B cell (primary cell): ENCODE measurements at regions of chr15 and their contacts with region 1.

Region 1: DNA sequence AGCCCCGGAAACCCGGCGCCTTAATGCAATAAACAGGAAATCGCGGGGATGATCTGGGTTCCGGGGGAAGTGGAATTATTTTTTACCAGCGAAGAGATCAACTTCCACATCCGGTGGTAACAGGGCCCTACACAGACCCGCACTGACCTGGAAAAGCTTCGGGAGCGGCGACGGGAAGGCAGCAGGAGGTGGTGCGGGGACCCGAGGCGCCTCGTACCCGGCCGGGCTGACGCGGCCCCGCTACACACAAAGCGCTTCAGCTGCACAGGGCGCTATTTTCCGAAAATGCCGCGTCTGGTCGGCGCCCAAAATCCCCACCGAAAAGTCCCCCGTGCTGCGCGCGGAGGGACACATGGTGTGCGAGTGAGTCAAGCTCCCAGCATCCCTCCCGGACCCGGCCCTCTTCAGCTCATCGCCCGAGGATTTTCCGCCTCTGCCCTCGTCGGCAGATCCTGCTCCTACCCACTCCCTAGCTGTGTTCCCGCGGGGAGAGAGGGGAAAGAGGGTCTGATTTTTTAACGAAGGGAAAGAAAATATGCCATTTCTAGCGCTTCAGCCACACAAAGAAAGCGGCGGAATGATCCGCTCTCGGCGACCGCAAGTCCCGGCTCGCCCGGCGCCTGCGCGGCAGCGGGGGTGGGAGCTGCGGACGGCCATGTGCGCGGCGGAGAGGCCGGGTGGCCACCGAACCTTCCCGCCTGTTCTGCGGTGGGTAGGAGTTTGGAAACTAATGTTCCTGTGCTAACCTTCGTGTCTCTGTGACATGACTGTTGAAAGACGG is at the start of gene GABPB1:
- DNase-seq: peak; percentile 99
- ATAC-seq: peak; percentile 58
- H3K4me3 ChIP-seq: peak within 1 kb of the TSS; percentile 71 to 91 (median 82)
- H3K4me3 Mint-ChIP-seq: peak within 1 kb of the TSS; percentile 95
- H3K27ac ChIP-seq: peak within 1 kb of the TSS; percentile 98 to 99
- H3K27ac Mint-ChIP-seq: peak within 1 kb of the TSS; percentile 98
- H3K4me1 ChIP-seq: peaks cover 44 to 52% of the 10 kb centered on the region in 2 donors
- H3K4me1 Mint-ChIP-seq: peaks cover 60% of the 10 kb centered on the region
- H3K27me3 ChIP-seq: no peaks in the 10 kb centered on the region
- H3K27me3 Mint-ChIP-seq: no peaks in the 10 kb centered on the region
- CTCF ChIP-seq: no peak
- total RNA-seq, gene GABPB1: 37.1 and 37.3 TPM in 2 replicates

Region 2: DNA sequence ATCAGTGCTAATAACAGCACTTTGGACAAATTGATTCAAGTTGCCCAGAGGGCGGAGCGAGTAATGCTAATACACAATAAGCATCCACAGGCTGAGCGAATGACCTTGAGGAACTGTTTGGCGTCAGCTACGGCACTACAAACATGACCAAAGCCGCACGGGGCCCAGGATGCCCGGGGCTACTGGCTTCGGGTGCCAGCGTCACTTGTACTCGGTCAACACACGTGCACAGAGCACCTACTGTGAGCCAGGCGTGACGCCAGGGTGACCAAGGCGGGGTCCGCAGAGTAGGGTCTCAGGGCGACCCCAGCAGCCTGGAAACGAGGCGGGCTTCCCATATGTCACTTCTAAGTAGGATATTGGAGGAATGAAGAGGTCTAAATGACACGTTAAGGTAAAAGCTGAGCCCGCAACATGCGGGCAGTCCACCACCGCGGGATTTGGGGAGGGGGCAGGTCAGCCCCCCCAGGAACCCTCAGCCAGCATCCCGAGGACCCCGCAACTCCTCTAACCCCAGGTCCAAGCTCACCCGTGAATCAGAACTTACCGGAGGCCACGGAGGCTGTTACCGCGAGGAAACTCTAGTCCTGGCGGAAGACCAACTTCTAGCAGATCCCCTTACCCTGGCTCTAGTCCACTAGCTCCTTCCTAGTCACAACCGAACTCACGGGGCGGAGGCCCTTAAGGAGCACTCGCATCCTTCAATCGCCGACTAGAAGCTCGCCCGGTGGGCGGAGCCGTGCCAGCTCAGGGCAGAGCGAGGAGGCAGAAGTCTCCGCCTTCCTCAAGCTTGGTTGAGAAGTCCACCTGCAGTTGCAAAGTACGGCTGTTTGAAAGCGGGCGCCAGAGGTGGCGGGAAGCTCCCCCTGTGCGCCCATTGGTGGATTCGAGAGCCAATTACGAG is 1544.4 kb before region 1 on chr15 and contains the start of gene CEP152:
- CTCF ChIA-PET with region 1: no interaction called
- POLR2A ChIA-PET with region 1: no interaction called
- intact Hi-C with region 1: loop called (anchors 1 kb)
- DNase-seq: peak; percentile 99
- ATAC-seq: peak; percentile 95
- H3K4me3 ChIP-seq: peak within 1 kb of the TSS; percentile 86 to 97 (median 94)
- H3K4me3 Mint-ChIP-seq: peak within 1 kb of the TSS; percentile 95
- H3K27ac ChIP-seq: peak within 1 kb of the TSS; percentile 74 to 76
- H3K27ac Mint-ChIP-seq: peak within 1 kb of the TSS; percentile 86
- H3K4me1 ChIP-seq: peaks cover 15 to 18% of the 10 kb centered on the region in 2 donors
- H3K4me1 Mint-ChIP-seq: peaks cover 30% of the 10 kb centered on the region
- H3K27me3 ChIP-seq: peaks cover 0 to 7% (median 0%) of the 10 kb centered on the region in 4 experiments
- H3K27me3 Mint-ChIP-seq: peaks cover 4% of the 10 kb centered on the region
- CTCF ChIP-seq: no peak
- total RNA-seq, gene CEP152: 18.0 and 18.1 TPM in 2 replicates

Region 3: DNA sequence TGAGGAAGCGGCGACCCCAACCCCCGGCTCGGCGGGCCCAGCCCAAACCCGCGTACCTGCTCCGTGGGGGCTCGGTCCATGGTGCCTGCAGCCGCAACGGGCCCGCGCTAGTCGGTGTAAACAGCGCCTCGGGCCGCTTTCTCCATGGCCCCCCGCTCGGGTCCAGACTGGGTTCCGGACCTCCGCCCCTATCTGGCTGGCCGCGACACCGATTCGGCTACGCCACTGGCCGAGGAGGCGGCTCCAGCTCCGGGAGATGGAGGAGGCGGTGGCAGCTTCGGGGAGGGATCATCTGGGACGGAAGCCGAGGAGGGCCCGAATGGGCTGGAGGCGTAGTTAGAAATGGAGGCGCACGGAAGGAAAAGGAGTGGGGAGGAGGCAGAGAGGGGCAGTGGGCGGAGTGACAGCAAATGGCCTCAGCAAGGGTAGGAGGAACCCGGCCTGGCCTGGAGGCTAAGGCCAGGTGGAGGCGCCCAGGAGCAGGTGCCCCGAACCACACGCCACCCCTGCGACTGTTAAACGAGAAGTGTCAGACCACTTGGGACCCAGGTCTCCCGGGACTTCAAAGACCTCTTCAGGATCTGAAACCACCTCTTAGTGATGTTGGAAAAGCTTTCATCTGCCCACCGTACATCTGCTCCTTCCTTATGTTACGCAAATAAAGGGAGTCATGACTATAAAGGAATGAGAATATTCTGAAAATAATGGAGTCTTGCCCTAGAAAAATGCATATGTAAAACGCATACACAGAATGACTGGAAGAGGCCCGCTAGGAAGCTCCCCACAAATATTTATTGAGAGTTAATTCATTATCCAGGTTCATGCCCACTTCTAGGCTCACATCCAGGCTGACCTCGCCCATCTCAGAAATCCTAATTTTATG is 1308.6 kb before region 1 on chr15 and contains the start of gene SECISBP2L:
- CTCF ChIA-PET with region 1: no interaction called
- POLR2A ChIA-PET with region 1: no interaction called
- intact Hi-C with region 1: loop called (anchors 10 kb)
- DNase-seq: peak; percentile 96
- ATAC-seq: peak; percentile 96
- H3K4me3 ChIP-seq: peak within 1 kb of the TSS; percentile 78 to 98 (median 80)
- H3K4me3 Mint-ChIP-seq: peak within 1 kb of the TSS; percentile 95
- H3K27ac ChIP-seq: peak within 1 kb of the TSS; percentile 83 to 89
- H3K27ac Mint-ChIP-seq: peak within 1 kb of the TSS; percentile 98
- H3K4me1 ChIP-seq: peaks cover 12 to 19% of the 10 kb centered on the region in 2 donors
- H3K4me1 Mint-ChIP-seq: peaks cover 32% of the 10 kb centered on the region
- H3K27me3 ChIP-seq: no peaks in the 10 kb centered on the region
- H3K27me3 Mint-ChIP-seq: no peaks in the 10 kb centered on the region
- CTCF ChIP-seq: peak; percentile 45
- total RNA-seq, gene SECISBP2L: 117 and 121 TPM in 2 replicates

Region 4: DNA sequence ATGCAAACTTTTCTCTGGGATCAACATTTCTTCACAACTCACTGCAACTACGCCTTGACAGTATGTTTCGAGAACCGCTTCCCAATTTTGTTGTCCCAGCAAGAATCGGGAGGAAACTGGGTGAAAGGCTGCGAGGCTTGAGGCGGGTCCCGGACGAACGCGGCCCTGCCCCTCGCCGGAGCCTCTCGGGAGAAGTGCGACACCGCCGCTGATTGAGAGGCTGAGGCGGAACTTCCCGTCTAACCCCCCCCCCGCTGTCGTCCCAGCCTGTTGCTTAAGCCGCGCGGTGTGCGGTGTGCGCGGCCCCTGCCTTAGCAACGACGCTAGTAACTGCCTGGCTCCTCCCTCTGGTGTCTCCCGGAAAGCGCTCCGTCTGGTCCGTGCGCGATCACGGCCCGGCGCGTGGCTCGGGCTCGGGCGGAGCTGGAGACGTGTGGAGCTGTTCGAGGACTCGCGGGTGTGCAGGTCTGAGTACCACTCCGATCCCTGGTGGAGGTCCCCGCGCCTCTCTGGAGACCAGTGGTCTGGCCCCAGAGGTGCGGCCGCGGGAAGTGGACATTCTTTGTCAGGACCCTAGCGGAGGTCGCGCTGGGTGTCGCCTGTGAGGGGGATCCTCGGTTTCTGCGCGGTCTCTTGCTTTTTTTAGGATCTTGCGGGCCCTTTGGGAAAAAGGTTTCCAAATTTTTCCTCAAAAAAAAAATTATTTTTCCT is 734.2 kb before region 1 on chr15 and contains the starts of genes DTWD1 and FAM227B:
- CTCF ChIA-PET with region 1: no interaction called
- POLR2A ChIA-PET with region 1: interaction called, 4 read pairs
- intact Hi-C with region 1: loop called (anchors 5 kb)
- DNase-seq: peak; percentile 96
- ATAC-seq: peak; percentile 98
- H3K4me3 ChIP-seq: peak within 1 kb of the TSS; percentile 75 to 91 (median 83)
- H3K4me3 Mint-ChIP-seq: peak within 1 kb of the TSS; percentile 93
- H3K27ac ChIP-seq: peak within 1 kb of the TSS; percentile 71 to 95
- H3K27ac Mint-ChIP-seq: peak within 1 kb of the TSS; percentile 96
- H3K4me1 ChIP-seq: peaks cover 11 to 18% of the 10 kb centered on the region in 2 donors
- H3K4me1 Mint-ChIP-seq: peaks cover 22% of the 10 kb centered on the region
- H3K27me3 ChIP-seq: no peaks in the 10 kb centered on the region
- H3K27me3 Mint-ChIP-seq: no peaks in the 10 kb centered on the region
- CTCF ChIP-seq: no peak
- total RNA-seq, gene DTWD1: 27.1 and 27.8 TPM in 2 replicates
- total RNA-seq, gene FAM227B: 8.9 and 9.2 TPM in 2 replicates

Region 5: GRCh38 chr15:50335251-50335650 is 19.8 kb before region 1 on chr15:
- CTCF ChIA-PET with region 1: interaction called, 3 read pairs
- POLR2A ChIA-PET with region 1: interaction called, 5 read pairs
- intact Hi-C with region 1: loop called (anchors 2 kb)
- DNase-seq: no peak
- ATAC-seq: no peak
- H3K4me3 ChIP-seq: no peak overlapping the region
- H3K4me3 Mint-ChIP-seq: no peak overlapping the region
- H3K27ac ChIP-seq: no peak overlapping the region
- H3K27ac Mint-ChIP-seq: no peak overlapping the region
- H3K4me1 ChIP-seq: peaks cover 9 to 13% of the 10 kb centered on the region in 2 donors
- H3K4me1 Mint-ChIP-seq: peaks cover 27% of the 10 kb centered on the region
- H3K27me3 ChIP-seq: no peaks in the 10 kb centered on the region
- H3K27me3 Mint-ChIP-seq: no peaks in the 10 kb centered on the region
- CTCF ChIP-seq: no peak

Region 6: DNA sequence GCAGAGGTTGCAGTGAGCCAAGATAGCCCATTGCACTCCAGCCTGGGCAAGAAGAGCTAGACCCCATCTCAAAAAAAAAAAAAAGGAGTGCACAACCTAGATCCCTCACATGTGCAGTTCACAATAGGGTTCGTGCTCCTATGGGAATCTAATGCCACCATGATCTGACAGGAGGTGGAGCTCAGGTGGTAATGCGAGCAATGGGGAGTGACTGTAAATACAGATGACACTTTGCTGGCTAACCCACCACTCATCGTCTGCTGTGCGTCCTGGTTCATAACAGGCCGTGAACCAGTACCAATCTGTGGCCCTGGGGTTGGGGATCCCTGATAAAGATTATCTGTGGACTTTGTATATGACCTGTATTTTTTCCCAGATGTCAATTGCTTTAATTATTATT is 85.9 kb after region 1 on chr15:
- CTCF ChIA-PET with region 1: interaction called, 3 read pairs
- POLR2A ChIA-PET with region 1: interaction called, 27 read pairs
- intact Hi-C with region 1: loop called (anchors 1 kb)
- DNase-seq: no peak
- ATAC-seq: no peak
- H3K4me3 ChIP-seq: no peak overlapping the region
- H3K4me3 Mint-ChIP-seq: no peak overlapping the region
- H3K27ac ChIP-seq: peak overlapping the region in 1 of 2 donors; percentile 26
- H3K27ac Mint-ChIP-seq: peak overlapping the region; percentile 59
- H3K4me1 ChIP-seq: peaks cover 20 to 24% of the 10 kb centered on the region in 2 donors
- H3K4me1 Mint-ChIP-seq: peaks cover 26% of the 10 kb centered on the region
- H3K27me3 ChIP-seq: no peaks in the 10 kb centered on the region
- H3K27me3 Mint-ChIP-seq: no peaks in the 10 kb centered on the region
- CTCF ChIP-seq: no peak

Region 7: GRCh38 chr15:50549321-50549720 is 194.3 kb after region 1 on chr15:
- CTCF ChIA-PET with region 1: no interaction called
- POLR2A ChIA-PET with region 1: no interaction called
- intact Hi-C with region 1: no loop called
- DNase-seq: no peak
- ATAC-seq: no peak
- H3K4me3 ChIP-seq: no peak overlapping the region
- H3K4me3 Mint-ChIP-seq: no peak overlapping the region
- H3K27ac ChIP-seq: no peak overlapping the region
- H3K27ac Mint-ChIP-seq: no peak overlapping the region
- H3K4me1 ChIP-seq: no peaks in the 10 kb centered on the region
- H3K4me1 Mint-ChIP-seq: no peaks in the 10 kb centered on the region
- H3K27me3 ChIP-seq: no peaks in the 10 kb centered on the region
- H3K27me3 Mint-ChIP-seq: no peaks in the 10 kb centered on the region
- CTCF ChIP-seq: no peak

Region 8: DNA sequence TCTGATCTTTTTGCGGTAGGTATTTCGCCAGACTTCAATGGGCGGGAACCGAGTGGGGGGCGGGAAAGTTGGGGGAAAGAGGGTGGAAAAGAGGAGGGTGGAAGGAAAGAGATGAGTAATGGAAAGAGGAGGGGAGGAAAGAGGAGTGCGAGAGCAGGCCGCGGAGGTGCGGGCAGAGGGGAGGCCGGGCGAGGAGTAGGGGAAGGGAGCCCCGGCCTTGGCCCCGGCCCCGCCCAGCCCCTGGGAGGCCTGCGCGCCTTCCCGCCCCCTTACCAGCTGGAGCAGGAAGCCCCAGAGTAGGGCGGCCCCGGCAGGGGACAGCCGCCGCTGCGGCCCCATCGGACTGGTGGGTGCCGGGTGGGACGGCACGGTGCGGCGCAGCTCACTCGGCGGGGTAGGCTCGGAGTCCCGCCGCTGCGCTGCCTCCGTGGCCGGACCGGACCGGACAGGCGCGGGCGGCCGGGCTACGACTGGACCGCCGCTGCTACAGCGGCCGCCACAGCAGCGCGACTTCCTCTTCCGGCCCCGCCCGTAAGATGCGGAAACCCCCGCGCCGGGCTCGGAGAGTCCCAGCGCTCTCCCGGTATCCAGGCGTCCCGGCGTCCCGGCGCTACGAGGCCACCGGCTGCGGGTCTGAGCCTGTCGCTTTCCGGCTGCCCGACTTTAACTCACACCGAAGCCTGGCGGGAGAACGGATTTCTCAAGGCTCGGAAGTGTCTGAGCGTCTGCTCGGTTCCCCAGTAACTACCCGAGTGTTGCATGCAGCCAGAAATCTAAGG is 410.4 kb after region 1 on chr15 and contains the start of gene SPPL2A:
- CTCF ChIA-PET with region 1: no interaction called
- POLR2A ChIA-PET with region 1: interaction called, 4 read pairs
- intact Hi-C with region 1: loop called (anchors 10 kb)
- DNase-seq: peak; percentile 91
- ATAC-seq: peak; percentile 94
- H3K4me3 ChIP-seq: peak within 1 kb of the TSS; percentile 84 to 98 (median 93)
- H3K4me3 Mint-ChIP-seq: peak within 1 kb of the TSS; percentile 88
- H3K27ac ChIP-seq: peak within 1 kb of the TSS; percentile 91
- H3K27ac Mint-ChIP-seq: peak within 1 kb of the TSS; percentile 93
- H3K4me1 ChIP-seq: peaks cover 17 to 23% of the 10 kb centered on the region in 2 donors
- H3K4me1 Mint-ChIP-seq: peaks cover 39% of the 10 kb centered on the region
- H3K27me3 ChIP-seq: no peaks in the 10 kb centered on the region
- H3K27me3 Mint-ChIP-seq: no peaks in the 10 kb centered on the region
- CTCF ChIP-seq: no peak
- total RNA-seq, gene SPPL2A: 78.3 and 78.4 TPM in 2 replicates

Region 9: DNA sequence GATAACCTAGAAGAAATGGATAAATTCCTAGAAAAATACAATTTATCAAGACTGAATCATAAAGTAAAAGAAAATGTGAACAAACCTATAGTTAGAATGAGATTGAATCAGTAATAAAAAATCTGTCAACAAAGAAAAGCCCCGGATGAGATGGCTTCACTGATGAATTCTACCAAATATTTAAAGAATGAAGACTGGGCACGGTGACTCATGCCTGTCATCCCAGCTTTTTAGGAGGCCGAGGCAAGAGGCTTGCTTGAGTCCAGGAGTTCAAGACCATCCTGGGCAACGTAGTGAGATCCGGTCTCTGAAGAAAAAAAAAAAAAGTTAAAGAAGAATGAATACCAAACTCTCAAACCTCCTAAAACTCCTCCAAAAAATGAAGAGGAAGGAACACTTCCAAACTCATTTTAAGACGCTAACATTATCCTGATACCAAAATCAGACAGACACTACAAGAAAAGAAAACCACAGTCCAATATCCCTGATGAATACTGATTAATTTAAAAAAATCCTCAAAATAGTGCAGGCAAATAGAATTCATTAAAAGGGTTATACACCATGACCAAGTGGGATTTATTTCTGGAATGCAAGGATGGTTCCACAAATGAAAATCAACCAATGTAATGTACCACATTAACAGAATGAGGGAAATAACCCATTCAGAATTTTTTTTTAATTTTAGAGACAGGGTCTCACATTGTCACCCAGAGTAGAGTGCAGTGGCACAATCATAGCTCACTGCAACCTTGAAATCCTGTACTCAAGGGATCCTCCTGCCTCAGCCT is 535.9 kb after region 1 on chr15:
- CTCF ChIA-PET with region 1: no interaction called
- POLR2A ChIA-PET with region 1: no interaction called
- intact Hi-C with region 1: no loop called
- DNase-seq: no peak
- ATAC-seq: no peak
- H3K4me3 ChIP-seq: no peak overlapping the region
- H3K4me3 Mint-ChIP-seq: no peak overlapping the region
- H3K27ac ChIP-seq: no peak overlapping the region
- H3K27ac Mint-ChIP-seq: no peak overlapping the region
- H3K4me1 ChIP-seq: no peaks in the 10 kb centered on the region
- H3K4me1 Mint-ChIP-seq: peaks cover under 1% of the 10 kb centered on the region
- H3K27me3 ChIP-seq: no peaks in the 10 kb centered on the region
- H3K27me3 Mint-ChIP-seq: no peaks in the 10 kb centered on the region
- CTCF ChIP-seq: no peak